ENCODE measurements at regions of chr5 and their contacts with region 1.

Region 1: DNA sequence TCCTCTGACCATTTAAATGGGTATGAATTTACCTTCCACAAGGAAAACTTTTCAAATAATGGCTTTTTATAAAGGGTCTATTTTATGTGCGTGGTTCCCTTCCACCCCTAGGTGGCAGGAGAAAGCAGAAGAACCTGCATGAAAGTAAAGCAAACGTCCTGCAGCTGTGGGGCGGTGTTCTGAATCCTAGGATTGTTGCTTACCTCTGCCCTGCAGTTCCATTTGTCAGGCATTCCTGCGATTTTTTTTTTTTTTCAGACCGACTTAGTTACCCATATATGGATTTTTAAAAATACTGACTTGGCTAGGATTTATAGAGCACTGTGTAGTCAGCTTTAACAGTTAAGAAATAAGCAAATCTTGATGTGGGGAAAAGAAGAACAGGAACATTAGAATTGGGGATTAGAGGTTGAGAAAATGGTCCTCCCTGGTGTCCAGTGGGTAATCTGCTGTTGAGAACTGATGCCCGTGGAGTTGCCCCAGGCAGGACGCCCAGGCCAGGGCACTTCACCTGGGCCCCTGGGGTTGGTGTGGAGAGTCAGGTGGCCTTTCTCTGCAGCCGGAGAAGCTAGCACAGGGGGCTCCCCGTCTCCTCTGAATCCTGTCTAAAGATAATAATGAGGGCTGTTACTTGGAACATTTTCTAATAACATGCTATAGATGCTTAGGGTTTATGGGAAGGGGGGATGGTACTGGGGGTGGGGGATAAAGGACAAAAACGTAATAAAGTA is 30.4 kb upstream of the LTC4S start:
- DNase-seq: peak; percentile 76
- H3K4me3 Mint-ChIP-seq: no peak overlapping the region
- H3K27ac Mint-ChIP-seq: no peak overlapping the region
- H3K4me1 Mint-ChIP-seq: peaks cover 46% of the 10 kb centered on the region
- H3K27me3 Mint-ChIP-seq: no peaks in the 10 kb centered on the region
- CTCF ChIP-seq: peak; percentile 83

Region 2: GRCh38 chr5:179777909-179778308 is 14.5 kb after region 1 on chr5:
- CTCF ChIA-PET with region 1: interaction called, 13 read pairs
- intact Hi-C with region 1: no loop called
- DNase-seq: no peak
- H3K4me3 Mint-ChIP-seq: no peak overlapping the region
- H3K27ac Mint-ChIP-seq: no peak overlapping the region
- H3K4me1 Mint-ChIP-seq: no peaks in the 10 kb centered on the region
- H3K27me3 Mint-ChIP-seq: no peaks in the 10 kb centered on the region
- CTCF ChIP-seq: no peak

Region 3: DNA sequence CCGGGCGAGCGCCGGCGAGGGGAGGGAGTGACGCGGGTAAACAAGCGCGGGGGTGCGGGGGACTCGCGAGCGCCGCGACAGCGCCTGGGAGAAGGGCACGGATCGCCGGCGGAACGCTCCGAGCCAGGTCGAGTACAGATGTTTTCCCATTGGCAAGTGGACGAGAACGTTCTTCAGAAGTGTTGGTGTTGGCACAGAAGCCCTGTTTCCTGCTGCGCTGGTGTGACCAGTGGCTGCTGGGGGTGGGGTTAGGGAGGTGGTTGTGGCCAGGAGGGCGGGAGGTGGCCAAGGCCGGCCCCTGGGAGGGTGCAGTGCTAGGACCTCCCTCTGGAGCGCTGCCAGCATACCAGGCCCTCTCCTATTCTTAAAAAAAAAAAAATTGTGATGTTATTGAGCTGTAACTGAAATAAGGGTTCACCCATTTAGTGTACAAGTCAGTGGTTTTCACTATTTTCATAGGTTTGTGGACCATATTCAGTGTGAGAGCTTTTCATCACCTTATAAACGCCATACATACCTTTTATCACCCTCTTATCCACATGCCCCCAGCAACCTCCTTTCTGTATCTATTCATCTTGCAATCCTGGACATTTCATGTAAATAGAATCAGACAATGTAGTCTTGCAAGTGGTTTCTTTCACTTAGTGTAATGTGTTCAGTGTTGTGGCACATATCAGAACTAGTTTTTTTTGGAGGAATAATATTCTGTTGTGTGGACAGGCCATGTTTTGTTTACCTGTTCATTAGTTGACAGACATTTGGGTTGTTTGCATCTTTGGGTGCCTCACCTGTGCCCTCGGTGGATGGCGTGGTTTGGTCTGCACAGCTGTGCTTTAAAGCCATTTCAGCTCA is 58.4 kb after region 1 on chr5:
- CTCF ChIA-PET with region 1: no interaction called
- intact Hi-C with region 1: loop called (anchors 5 kb)
- DNase-seq: peak; percentile 98
- H3K4me3 Mint-ChIP-seq: peak overlapping the region; percentile 97
- H3K27ac Mint-ChIP-seq: peak overlapping the region; percentile 99
- H3K4me1 Mint-ChIP-seq: peaks cover 50% of the 10 kb centered on the region
- H3K27me3 Mint-ChIP-seq: no peaks in the 10 kb centered on the region
- CTCF ChIP-seq: no peak

Region 4: DNA sequence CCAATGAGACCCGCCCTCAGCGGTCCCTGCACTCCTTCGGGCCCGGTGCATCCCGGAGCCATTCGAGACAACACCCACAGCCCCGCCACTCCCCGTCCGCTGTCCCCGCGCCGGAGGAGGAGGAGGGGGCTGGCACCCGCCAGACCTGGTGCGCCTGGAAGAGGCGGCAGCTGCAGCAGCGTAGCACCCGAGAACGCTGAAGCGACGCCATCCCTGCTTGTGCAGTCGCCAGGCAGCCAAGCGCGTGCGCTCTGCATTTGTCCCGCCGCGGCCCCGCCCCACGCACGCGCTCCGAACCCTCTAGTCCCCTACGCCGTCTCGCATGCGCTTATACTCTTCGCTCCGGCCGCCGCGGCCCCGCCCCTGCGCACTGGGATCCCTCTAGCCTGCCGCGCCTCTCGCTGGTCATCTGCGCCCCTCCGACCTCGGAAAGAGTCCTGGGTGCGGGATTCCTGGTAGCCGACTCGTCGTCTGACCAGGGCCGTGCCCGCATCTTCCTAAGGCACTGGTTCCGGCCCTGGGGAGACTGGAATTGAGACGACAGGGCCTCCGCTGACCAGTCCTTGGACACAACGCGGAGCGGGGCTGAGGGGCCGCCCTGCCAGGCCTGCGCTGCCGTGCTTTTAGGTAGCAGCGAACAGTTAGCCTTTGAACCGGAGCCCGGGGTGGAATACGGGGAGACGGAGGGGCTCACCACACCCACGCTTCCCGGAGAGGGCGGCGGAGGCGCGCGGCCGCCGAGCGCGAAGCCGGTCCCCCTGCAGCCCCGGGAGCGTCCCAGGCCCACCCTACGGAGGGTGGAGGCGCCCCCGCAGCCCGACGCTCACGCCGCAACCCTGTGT is 95.4 kb after region 1 on chr5 and contains the start of gene MRNIP:
- CTCF ChIA-PET with region 1: no interaction called
- intact Hi-C with region 1: loop called (anchors 1 kb)
- DNase-seq: peak; percentile 98
- H3K4me3 Mint-ChIP-seq: peak within 1 kb of the TSS; percentile 99
- H3K27ac Mint-ChIP-seq: peak within 1 kb of the TSS; percentile 86
- H3K4me1 Mint-ChIP-seq: no peaks in the 10 kb centered on the region
- H3K27me3 Mint-ChIP-seq: no peaks in the 10 kb centered on the region
- CTCF ChIP-seq: no peak
- total RNA-seq, gene MRNIP: 41.5 and 47.1 TPM in 2 replicates

Measured in Calu3 (cell line).